ENCODE measurements at regions of chr17 and their contacts with region 1.

Region 1: DNA sequence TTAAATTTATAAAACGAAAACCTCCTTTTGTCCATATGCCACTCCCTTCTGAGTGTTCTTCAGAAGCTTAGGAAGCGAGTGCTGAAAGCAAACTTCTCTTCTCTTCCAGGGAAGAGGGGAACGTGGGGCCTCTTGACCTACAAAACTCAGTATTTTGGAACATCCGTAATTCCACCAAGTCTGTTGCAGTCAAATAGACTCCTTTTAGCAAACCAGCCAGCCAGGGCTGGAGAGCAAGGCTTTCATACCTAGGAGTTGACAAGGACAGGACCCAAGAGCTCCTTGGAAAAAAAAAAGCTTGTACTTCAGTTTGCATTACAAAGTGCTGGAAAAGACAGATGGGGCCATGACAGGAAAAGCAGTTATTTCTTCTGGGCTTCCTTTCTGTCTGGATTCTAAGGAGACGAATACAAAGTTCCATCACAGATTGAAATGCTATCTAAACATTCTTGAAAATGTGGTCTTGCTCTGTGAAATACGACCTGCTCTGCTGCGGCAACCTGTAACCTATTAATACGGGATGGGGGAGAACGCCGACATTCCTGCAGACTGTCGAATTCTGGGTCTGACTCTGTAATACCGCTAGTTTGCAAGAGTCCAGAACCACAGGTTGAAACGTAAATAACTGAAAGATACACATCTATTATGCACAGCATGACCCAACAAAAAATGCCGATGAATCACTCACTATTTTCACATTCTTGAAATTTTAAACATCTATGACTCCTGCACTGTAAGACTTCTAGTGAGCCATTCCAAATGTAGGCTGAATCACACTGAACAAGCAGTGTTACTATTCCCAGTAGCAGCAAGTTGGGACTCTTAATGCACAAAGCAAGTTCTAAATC is 20.6 kb downstream of the VPS53 start:
- DNase-seq: no peak
- H3K4me3 ChIP-seq: no peak overlapping the region
- H3K27ac ChIP-seq: no peak overlapping the region
- H3K4me1 ChIP-seq: no peaks in the 10 kb centered on the region
- H3K27me3 ChIP-seq: no peaks in the 10 kb centered on the region
- CTCF ChIP-seq: no peak
- POLR2A ChIP-seq: no peak

Region 2: GRCh38 chr17:559551-560431 is 134.2 kb before region 1 on chr17:
- intact Hi-C with region 1: loop called (anchors 10 kb)
- DNase-seq: no peak
- H3K4me3 ChIP-seq: no peak overlapping the region
- H3K27ac ChIP-seq: no peak overlapping the region
- H3K4me1 ChIP-seq: no peaks in the 10 kb centered on the region
- H3K27me3 ChIP-seq: no peaks in the 10 kb centered on the region
- CTCF ChIP-seq: no peak
- POLR2A ChIP-seq: no peak

Measured in prostate gland (tissue), 2 donors.